ENCODE measurements at regions of chr7 and their contacts with region 1.

Region 1: DNA sequence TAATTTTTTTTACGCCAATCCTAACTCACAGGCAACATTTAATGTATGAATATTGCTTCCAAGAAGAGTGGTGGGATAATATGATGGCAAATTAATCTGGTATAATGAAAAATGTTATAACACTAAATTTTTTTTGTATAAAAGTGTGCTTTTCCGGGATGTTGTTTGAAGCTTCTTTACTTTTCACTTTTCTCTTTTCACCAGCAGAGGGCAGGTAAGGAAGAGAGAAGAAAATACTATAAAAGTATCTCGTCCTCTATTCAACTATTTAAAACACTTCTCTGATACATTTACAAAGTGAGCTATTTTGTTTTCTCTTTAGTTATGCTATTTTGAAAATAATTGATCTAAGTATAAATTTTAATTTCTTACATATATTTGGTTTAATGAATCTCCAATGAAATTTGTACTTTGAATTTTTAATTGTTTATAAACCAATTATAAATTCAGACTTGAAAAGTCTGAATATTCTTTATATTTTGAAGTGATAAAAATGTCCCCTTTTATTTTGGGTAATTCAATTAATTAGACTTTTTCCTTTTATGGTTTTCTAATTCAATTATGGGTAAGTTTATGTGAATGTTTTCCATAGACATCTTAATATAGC is 20.7 kb upstream of the CFTR start:
- DNase-seq: no peak
- H3K4me3 ChIP-seq: no peak overlapping the region
- H3K27ac ChIP-seq: no peak overlapping the region
- H3K4me1 ChIP-seq: no peaks in the 10 kb centered on the region
- H3K27me3 ChIP-seq: peaks cover 0 to 5% (median 0%) of the 10 kb centered on the region in 4 donors
- CTCF ChIP-seq: peak; percentile 47 to 63 (median 49)
- EP300 ChIP-seq: no peak
- POLR2A ChIP-seq: no peak

Region 2: GRCh38 chr7:117219485-117219884 is 239.6 kb before region 1 on chr7:
- intact Hi-C with region 1: no loop called
- DNase-seq: no peak
- H3K4me3 ChIP-seq: no peak overlapping the region
- H3K27ac ChIP-seq: no peak overlapping the region
- H3K4me1 ChIP-seq: no peaks in the 10 kb centered on the region
- H3K27me3 ChIP-seq: no peaks in the 10 kb centered on the region
- CTCF ChIP-seq: no peak
- EP300 ChIP-seq: no peak
- POLR2A ChIP-seq: no peak

Region 3: GRCh38 chr7:117532656-117533055 is 73.6 kb after region 1 on chr7:
- intact Hi-C with region 1: no loop called
- DNase-seq: no peak
- H3K4me3 ChIP-seq: no peak overlapping the region
- H3K27ac ChIP-seq: no peak overlapping the region
- H3K4me1 ChIP-seq: peaks cover 0 to 5% (median 1%) of the 10 kb centered on the region in 4 donors
- H3K27me3 ChIP-seq: no peaks in the 10 kb centered on the region
- CTCF ChIP-seq: no peak
- EP300 ChIP-seq: no peak
- POLR2A ChIP-seq: no peak

Region 4: GRCh38 chr7:117630501-117630900 is 171.4 kb after region 1 on chr7:
- intact Hi-C with region 1: no loop called
- DNase-seq: no peak
- H3K4me3 ChIP-seq: no peak overlapping the region
- H3K27ac ChIP-seq: no peak overlapping the region
- H3K4me1 ChIP-seq: no peaks in the 10 kb centered on the region
- H3K27me3 ChIP-seq: no peaks in the 10 kb centered on the region
- CTCF ChIP-seq: no peak
- EP300 ChIP-seq: no peak
- POLR2A ChIP-seq: no peak

Region 5: GRCh38 chr7:117673839-117674238 is 214.8 kb after region 1 on chr7:
- intact Hi-C with region 1: loop called (anchors 5 kb)
- DNase-seq: no peak
- H3K4me3 ChIP-seq: no peak overlapping the region
- H3K27ac ChIP-seq: no peak overlapping the region
- H3K4me1 ChIP-seq: peaks cover 0 to 7% (median 0%) of the 10 kb centered on the region in 4 donors
- H3K27me3 ChIP-seq: no peaks in the 10 kb centered on the region
- CTCF ChIP-seq: peak in 2 of 3 experiments; percentile 14 to 39
- EP300 ChIP-seq: no peak
- POLR2A ChIP-seq: no peak

Region 6: DNA sequence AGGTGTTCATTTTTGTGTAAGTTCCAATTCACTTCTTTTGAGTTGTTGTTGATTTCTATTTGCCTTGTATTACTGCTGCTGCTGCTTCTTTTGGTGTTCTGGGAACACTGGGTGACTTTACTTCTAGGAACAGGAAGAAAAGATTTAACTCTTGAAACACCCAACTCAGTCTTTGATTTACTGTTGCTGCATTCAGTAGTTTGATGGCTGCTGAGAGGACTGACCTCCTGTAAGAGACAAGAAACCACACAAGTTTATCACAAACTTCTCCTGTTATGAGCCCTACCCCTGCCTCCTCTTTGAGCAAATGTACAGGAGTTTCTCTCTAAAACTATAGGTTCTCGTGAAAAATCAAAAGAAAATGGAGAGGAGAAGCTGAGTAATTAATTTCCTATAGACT is 252.5 kb after region 1 on chr7:
- intact Hi-C with region 1: loop called (anchors 5 kb)
- DNase-seq: no peak
- H3K4me3 ChIP-seq: no peak overlapping the region
- H3K27ac ChIP-seq: no peak overlapping the region
- H3K4me1 ChIP-seq: no peaks in the 10 kb centered on the region
- H3K27me3 ChIP-seq: no peaks in the 10 kb centered on the region
- CTCF ChIP-seq: no peak
- EP300 ChIP-seq: no peak
- POLR2A ChIP-seq: no peak